ENCODE measurements at regions of chr4 and their contacts with region 1.

Region 1: DNA sequence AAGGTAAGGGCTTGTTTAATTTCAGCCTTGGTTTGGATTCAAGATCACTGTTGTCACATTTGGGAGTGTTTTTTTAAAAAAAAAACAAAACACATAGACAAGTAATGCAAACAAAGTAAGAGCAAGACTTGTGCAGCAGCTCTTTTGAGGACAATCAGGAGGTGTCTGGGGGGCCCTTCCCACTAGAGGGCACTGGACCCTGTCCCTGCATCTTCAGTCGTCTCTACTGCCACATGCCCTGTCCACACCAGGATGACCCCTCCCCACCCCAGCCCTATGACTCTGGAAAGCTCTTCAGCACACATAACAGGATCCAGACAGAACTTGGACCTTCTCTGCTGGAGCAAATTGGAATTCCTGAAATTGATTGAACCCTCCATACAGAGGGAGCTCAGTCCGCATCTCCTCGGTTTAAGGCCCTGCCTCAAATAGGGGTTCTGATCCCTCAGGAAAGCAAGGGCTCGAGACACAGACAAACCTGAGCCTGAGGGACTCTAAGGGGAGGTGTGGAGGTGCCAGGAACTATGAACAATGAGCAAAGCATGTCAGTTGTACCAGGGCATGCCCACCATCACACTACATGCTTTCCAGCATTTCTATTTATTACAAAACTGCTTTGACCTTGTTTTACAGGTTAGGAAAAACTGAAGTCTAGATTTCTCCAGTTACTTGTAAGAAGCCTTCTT is 70.9 kb downstream of the USP46 start:
- DNase-seq: peak; percentile 36
- H3K4me3 Mint-ChIP-seq: no peak overlapping the region
- H3K27ac Mint-ChIP-seq: peak overlapping the region; percentile 81
- H3K4me1 Mint-ChIP-seq: peaks cover 40% of the 10 kb centered on the region
- H3K27me3 Mint-ChIP-seq: peaks cover 4% of the 10 kb centered on the region

Region 2: DNA sequence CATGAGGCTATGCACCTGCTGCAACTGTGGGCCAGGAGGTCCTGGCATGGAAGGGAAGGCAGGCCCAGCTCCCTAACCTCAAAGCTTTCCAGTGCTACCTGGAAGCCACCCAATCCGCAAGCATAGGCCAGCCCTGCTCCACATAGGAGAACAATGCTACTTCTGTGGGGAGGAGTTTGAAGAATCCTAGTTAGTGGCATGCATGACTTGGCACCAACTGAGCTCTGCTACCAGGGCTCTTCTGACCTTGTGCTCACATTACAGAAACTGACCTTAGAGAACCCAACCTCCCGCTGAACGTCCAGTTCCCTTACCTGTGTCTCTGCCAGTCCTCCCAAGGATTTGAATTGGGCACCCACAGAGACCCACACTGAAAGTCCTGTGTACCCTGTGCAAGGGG is 12.0 kb after region 1 on chr4:
- CTCF ChIA-PET with region 1: no interaction called
- POLR2A ChIA-PET with region 1: no interaction called
- DNase-seq: no peak
- H3K4me3 Mint-ChIP-seq: no peak overlapping the region
- H3K27ac Mint-ChIP-seq: no peak overlapping the region
- H3K4me1 Mint-ChIP-seq: peaks cover 2% of the 10 kb centered on the region
- H3K27me3 Mint-ChIP-seq: no peaks in the 10 kb centered on the region

Region 3: DNA sequence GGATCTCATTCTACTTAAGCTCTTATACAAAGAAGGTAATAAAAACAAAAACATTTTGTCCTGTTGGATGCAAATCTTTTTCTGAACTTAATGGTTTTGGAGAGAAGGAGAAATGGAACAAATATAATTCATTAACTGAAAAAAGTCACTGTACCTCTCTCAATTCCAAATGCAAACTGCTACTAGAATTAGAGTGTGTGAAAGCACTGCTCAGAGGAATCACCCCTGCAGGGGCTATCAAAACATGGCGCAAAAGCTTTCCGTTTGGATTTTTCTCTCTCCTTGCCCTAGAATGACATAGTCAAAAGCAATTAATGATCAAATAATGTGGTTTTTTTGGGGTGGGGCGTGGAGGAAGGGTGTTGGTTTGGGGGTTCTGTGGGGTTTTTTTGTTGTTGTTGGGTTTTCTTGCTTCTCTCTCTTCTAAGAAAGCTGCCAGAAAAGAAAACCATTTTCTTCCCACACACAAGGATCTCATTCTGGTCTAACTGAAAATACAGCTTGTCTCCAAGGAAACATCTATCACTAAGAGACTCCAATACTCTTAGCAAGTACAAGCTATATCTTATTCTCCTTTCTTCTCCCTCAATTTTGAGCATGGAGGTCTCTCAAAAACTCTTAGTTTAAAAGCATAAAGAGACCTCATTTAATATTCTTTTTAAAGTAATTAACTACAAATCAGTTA is 29.2 kb after region 1 on chr4:
- CTCF ChIA-PET with region 1: interaction called, 15 read pairs
- POLR2A ChIA-PET with region 1: interaction called, 8 read pairs
- DNase-seq: peak; percentile 30
- H3K4me3 Mint-ChIP-seq: no peak overlapping the region
- H3K27ac Mint-ChIP-seq: peak overlapping the region; percentile 58
- H3K4me1 Mint-ChIP-seq: peaks cover 38% of the 10 kb centered on the region
- H3K27me3 Mint-ChIP-seq: no peaks in the 10 kb centered on the region